ENCODE measurements at regions of chr17 and their contacts with region 1.

Region 1: GRCh38 chr17:43878260-43879175 is 28.8 kb downstream of the MPP2 start:
- DNase-seq: peak; percentile 65
- H3K4me3 ChIP-seq: no peak overlapping the region
- CTCF ChIP-seq: peak; percentile 100

Region 2: GRCh38 chr17:43645765-43646481 is 232.6 kb before region 1 on chr17:
- CTCF ChIA-PET with region 1: no interaction called
- POLR2A ChIA-PET with region 1: no interaction called
- DNase-seq: no peak
- H3K4me3 ChIP-seq: peak overlapping the region; percentile 27
- CTCF ChIP-seq: no peak

Region 3: GRCh38 chr17:43778337-43779144 is 100.0 kb before region 1 on chr17 and contains the start of gene DUSP3:
- CTCF ChIA-PET with region 1: no interaction called
- POLR2A ChIA-PET with region 1: no interaction called
- DNase-seq: peak; percentile 40
- H3K4me3 ChIP-seq: peak within 1 kb of the TSS; percentile 95
- CTCF ChIP-seq: no peak

Region 4: GRCh38 chr17:43891851-43892646 is 13.5 kb after region 1 on chr17:
- CTCF ChIA-PET with region 1: interaction called, 121 read pairs
- POLR2A ChIA-PET with region 1: no interaction called
- DNase-seq: no peak
- H3K4me3 ChIP-seq: no peak overlapping the region
- CTCF ChIP-seq: no peak

Region 5: GRCh38 chr17:43907425-43907981 is 29.0 kb after region 1 on chr17 and contains the start of gene MPP2:
- CTCF ChIA-PET with region 1: interaction called, 99 read pairs
- POLR2A ChIA-PET with region 1: no interaction called
- DNase-seq: no peak
- H3K4me3 ChIP-seq: peak within 1 kb of the TSS; percentile 74
- CTCF ChIP-seq: peak; percentile 32

Region 6: DNA sequence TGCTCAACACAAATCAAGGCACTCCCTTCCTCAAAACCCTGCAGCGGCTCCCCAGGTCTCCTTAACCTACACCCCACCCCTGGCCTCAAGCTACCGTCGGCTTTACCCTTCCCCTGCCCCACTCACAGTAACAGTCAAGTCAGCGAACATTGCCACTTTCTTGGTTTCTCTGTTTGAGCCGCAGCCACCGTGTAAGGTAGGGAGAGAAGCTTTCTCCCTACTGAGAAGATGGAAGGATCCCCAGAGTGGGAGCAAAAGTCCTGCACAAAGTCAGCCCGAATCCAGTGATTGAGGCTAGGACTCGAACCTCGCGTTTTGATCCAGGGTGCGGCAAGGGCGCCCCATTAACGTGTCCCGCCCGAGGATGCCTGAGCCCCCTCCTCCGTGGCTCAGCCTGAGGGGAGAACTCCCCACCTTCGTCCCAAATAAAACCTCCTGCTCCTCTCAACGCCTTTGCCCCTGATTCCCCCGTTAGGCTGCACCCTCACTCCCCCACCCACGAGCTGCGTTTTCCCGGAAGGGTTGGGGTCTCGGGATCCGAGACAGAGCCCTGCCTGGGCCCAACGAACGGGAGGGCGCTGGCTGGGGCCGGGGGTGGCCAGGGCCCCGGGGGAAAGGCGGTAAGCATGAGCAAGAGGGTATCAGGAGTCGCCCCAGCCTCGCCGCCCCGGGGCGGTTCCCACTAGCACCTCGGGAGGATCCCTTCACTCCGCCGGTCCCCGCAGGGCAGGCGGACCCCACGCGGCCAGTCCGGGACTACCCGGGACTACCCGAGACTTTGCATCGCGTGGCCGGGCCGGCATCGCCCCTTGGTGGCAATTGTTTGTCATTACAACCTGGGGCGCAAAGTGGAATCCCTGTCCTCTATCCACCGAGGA is 116.0 kb after region 1 on chr17:
- CTCF ChIA-PET with region 1: interaction called, 97 read pairs
- POLR2A ChIA-PET with region 1: no interaction called
- DNase-seq: no peak
- H3K4me3 ChIP-seq: peak overlapping the region; percentile 50
- CTCF ChIP-seq: peak; percentile 85

Region 7: GRCh38 chr17:44170499-44171201 is 292.1 kb after region 1 on chr17 and contains the start of gene ASB16:
- CTCF ChIA-PET with region 1: interaction called, 30 read pairs
- POLR2A ChIA-PET with region 1: no interaction called
- DNase-seq: no peak
- H3K4me3 ChIP-seq: no peak within 1 kb of the TSS
- CTCF ChIP-seq: no peak